ENCODE measurements at regions of chr14 and their contacts with region 1.

Region 1: DNA sequence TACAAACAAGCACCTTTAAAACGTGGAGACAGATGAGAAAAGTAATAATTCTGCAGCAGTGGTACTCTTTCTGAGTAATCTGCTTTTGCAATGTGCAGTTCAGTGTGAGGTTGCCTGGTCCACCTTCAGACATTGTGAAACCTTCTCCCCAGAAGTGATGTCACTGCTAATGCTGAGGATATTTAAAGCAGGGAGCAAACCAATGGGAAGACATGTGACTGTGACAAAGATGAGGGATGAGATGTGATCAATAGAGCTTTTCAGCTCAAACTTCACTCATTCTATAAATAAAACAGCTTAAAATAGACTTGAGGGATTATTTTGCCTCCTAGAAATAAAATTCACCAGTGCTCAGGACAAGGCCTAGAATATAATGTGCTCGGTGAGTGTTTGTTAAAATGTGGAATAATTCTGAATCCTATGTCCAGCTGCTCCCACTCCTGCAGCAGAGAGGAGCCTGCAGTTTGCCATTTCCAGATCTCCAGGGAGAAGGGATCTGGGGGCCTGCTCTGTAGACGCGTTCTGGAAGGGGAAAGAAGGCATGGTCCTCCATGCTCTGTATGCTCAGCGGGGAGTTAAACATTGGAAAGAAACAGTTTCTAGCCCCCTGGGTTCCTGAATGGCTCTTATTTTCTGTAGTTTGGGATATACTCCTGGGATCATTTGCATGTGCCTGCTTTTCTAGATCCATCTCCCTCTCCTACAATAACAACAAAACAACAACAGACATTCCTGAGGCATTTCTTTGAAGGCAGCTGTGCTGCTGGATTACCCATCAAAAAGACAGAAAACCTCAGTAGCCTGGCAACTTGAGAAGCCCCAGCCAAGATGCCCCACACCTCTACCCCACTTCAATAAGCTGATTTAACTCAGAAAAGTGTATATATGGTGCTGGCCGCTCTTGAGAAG is 8.9 kb downstream of the SLC7A8 start:
- DNase-seq: peak; percentile 73
- H3K4me3 ChIP-seq: no peak overlapping the region
- H3K27ac ChIP-seq: no peak overlapping the region
- H3K4me1 ChIP-seq: peaks cover 54% of the 10 kb centered on the region
- H3K27me3 ChIP-seq: no peaks in the 10 kb centered on the region
- CTCF ChIP-seq: no peak

Region 2: GRCh38 chr14:22929104-22929847 is 245.3 kb before region 1 on chr14 and contains the start of gene PRMT5:
- CTCF ChIA-PET with region 1: no interaction called
- dilution Hi-C with region 1: no loop called
- in situ Hi-C with region 1: no loop called
- intact Hi-C with region 1: loop called (anchors 5 kb)
- DNase-seq: peak; percentile 99
- H3K4me3 ChIP-seq: peak within 1 kb of the TSS; percentile 87 to 97 (median 94)
- H3K27ac ChIP-seq: peak within 1 kb of the TSS; percentile 87
- H3K4me1 ChIP-seq: peaks cover 27% of the 10 kb centered on the region
- H3K27me3 ChIP-seq: no peaks in the 10 kb centered on the region
- CTCF ChIP-seq: no peak
- total RNA-seq, gene PRMT5: 61.3 to 120 TPM

Region 3: GRCh38 chr14:23137192-23137829 is 37.2 kb before region 1 on chr14:
- CTCF ChIA-PET with region 1: no interaction called
- dilution Hi-C with region 1: no loop called
- in situ Hi-C with region 1: no loop called
- intact Hi-C with region 1: loop called (anchors 2 kb)
- DNase-seq: peak; percentile 80
- H3K4me3 ChIP-seq: no peak overlapping the region
- H3K27ac ChIP-seq: peak overlapping the region; percentile 66
- H3K4me1 ChIP-seq: peaks cover 30% of the 10 kb centered on the region
- H3K27me3 ChIP-seq: no peaks in the 10 kb centered on the region
- CTCF ChIP-seq: no peak

Region 4: DNA sequence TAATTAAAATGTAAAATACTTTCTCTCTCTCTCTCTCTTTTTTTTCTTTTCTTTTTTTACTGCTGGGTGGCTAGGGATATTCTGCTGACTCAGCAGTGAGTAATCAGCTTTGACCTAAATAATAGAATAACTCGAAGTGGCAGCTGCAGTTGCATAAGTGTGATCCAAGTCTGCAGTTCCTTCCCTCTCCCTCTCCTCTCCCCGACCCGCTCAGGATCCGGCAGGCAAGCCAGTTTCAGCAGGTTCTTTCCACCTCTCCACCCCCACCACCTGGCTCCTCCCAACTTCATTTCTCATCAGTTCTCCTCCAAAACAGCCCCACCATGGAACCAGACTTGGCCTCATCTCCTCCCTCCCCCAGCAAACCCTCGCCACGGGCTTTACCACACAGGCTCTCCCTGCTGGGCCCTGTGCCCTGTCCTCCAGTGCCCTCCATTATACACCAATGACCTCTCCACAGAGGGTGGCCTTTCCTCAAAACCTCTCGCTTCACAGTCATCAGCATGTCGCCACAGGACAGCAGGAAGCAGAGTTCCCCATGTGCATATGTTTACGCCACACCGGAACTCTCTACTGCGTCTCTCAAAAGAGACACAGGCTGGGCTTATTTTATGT is 13.5 kb before region 1 on chr14:
- CTCF ChIA-PET with region 1: no interaction called
- dilution Hi-C with region 1: no loop called
- in situ Hi-C with region 1: no loop called
- intact Hi-C with region 1: loop called (anchors 1 kb)
- DNase-seq: peak; percentile 84
- H3K4me3 ChIP-seq: no peak overlapping the region
- H3K27ac ChIP-seq: no peak overlapping the region
- H3K4me1 ChIP-seq: peaks cover 9% of the 10 kb centered on the region
- H3K27me3 ChIP-seq: no peaks in the 10 kb centered on the region
- CTCF ChIP-seq: no peak

Measured in mammary epithelial cell (primary cell).